GM13976 (cell line): ENCODE measurements at regions of chr6 and their contacts with region 1.

Region 1: GRCh38 chr6:55886185-55886836 is 10.9 kb upstream of the BMP5 start:
- DNase-seq: no peak
- CTCF ChIP-seq: no peak

Region 2: DNA sequence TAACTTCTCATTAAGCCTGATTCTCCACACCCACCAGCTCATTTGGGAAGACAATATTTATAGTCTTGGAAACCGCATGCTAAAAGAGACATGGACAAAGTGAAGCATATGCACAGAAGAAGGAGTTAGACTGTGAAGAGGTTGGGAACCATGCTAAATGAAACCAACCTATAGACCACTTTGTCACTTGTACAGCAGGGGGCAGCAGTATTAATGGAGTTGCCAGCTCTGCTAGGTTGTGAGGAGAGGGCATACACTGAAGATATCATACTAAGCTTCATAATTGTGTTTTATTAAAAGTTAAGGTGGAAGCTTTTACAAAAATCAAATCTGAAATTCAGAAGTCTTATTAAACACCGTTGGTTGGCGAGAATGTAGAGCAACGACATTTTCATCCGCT is 269.0 kb before region 1 on chr6:
- in situ Hi-C with region 1: loop called (anchors 25 kb)
- DNase-seq: peak; percentile 5
- CTCF ChIP-seq: peak; percentile 50

Region 3: GRCh38 chr6:55953335-55953734 is 67.0 kb after region 1 on chr6:
- in situ Hi-C with region 1: no loop called
- DNase-seq: no peak
- CTCF ChIP-seq: no peak

Region 4: DNA sequence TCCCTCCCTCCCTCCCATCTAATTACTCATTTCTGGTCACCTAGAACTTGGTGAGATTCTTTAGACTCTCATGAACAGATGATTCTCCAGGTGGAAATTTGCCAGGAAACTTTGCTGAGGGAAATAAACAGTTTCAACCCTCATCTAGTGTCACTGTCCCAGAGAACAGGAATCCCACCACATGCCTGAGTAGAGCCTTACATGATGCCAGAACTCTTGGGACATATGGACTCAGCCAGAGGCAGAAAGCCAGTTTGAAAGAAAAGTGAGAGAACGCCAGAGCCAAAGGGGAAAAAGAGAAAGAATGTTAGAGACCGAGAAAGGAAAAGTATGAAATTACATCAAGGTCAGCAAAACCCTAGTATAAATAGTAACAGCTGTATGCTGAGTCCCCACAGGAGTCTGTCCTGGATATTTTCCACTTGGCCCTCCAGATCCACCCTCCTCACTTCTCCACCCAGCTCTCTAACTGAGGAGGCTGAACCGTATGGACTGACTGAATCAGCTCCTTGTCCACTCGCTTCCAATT is 488.6 kb after region 1 on chr6:
- in situ Hi-C with region 1: no loop called
- DNase-seq: no peak
- CTCF ChIP-seq: no peak